Cardiac septum (tissue), 1 donor: ENCODE measurements at regions of chr7 and their contacts with region 1.

Region 1: GRCh38 chr7:131071786-131072504 is 255.7 kb upstream of the MKLN1 start:
- DNase-seq: no peak

Region 2: DNA sequence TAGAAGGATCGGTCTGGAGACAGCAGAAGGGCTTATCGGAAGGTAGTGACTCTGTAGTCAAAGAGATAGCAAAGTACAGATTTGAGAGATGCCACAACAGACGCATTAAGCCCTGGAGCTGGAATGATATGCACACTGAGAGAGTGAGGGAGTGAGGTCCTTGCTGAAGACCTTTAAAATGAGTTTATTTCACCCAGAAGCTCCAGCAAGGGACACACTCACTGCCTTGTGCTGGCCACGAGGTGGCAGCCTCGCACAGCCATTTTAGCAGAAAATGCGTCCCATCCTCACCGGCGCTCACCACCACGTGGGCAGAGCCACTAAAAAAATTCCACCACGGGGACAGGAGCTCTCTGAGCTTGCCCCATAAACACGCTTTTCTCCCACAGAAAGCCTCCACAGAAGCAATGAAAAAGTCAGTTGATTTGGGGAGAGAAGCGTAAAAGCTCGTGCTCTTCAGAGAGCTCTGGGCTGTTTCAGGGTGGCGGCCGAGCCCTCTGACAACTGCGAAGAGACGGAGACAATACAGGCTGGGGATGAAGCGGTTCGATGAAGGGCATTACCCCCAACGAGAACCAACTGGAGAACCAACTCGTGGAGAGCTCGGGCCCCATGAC is 174.9 kb before region 1 on chr7:
- intact Hi-C with region 1: no loop called
- DNase-seq: peak; percentile 84

Region 3: GRCh38 chr7:131284702-131285419 is 212.9 kb after region 1 on chr7:
- intact Hi-C with region 1: loop called (anchors 5 kb)
- DNase-seq: no peak

Region 4: DNA sequence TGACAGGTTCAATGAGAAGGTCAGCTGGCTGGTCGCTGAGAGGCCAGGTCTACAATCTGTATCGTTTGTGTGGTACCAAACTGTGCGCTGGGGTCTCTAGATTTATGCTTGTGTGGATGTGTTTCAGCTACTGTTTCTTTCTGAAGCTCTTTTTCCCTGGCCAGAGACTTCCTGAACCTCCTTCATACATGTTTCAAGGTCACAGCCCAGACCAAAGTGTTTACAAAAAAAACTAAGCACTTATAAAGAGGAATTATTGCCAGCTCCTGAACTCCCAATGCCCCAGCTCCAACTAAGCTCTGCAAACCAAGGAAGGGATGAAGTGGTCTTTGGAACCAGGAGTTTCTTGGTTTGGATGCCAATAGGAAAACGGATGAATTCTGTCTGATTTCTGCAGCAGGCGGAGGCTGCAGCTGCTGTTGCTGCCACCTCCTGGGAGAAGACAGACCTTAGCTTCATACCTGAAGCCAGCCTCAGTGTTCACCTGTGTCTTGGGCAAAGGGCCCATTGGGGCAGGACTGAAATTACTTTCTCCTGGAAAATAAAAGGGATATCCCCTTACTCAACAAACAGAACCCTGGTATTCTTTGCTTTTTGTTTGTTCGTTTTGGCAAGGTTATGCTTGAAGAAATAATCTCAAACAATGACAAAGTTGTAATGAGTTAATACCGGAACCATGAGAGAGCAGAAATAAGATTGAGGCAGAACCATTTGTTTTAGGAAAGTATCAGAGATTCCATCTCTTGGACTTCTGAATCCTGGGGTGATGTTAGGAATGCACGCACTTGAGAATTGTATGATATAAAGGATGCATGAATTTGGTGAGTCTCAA is 231.1 kb after region 1 on chr7:
- intact Hi-C with region 1: loop called (anchors 5 kb)
- DNase-seq: no peak

Region 5: DNA sequence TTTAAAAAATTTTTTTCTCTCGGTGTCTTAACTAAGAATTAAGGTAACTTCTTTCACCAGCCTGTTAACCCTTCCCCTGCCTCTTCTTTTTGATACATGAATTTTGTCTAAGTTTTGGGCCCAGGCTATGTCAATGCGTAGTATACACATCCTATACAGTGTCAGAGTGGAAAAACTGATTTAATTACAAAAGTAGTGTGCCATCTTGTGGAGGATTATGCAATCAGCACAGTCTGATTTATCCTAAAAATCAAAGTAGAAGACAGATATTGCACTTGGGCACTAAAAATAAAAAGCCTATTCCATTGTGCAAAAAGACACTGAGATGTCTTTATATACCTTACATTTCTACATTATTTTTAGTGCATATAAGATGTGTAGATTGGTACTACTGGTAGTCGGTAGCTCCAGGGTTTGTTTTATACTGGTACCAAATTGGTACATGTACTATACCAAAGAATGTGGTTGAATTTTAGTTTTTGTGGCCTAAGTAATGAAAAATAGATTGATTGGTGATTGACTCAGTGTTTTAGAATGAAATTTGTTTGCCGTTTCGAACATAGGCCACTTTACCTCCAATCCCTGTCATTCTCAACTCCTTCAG is 352.4 kb after region 1 on chr7:
- intact Hi-C with region 1: loop called (anchors 2 kb)
- DNase-seq: no peak